WTC11 (cell line): ENCODE measurements at regions of chr19 and their contacts with region 1.

Region 1: DNA sequence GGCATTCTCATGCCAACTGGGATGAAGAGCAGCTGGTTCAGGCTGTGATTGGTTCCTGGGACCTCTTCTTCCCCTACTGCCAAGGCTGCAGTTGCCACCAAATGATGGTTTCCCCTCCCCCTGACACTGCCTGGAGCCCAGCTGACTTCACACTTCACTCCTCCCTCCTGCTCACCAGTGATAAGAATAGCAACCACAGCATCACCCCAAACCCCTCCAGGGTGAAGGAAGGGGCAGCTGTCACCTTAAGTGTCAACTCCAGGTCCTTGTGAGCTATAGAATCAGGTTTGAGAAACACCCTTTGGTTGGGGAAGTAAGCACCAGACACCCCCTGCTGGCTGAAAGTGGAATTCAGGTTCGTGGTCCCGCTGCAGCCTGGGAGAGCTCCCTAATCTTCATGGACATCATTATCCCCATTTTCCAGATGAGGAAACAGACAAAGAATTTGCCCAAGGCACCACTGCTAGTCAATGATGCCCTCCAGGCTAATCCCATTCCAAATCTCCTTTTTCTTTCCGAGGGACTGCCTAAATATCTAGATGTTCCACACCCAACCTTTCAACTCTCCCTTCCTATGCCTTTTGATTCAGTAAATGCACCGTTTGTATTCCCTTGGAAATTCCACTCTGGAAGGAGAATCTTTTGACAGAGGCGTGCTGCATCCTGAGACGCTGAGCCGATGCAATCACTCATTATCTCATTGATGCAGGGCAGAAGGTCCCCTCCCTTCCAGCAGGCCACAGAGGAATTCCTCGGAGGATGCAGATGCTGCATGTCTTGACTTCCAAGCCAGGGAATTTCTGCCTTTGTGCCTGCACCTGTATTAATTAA is 50.6 kb upstream of the UQCRFS1 start:
- DNase-seq: peak; percentile 78
- ATAC-seq: peak; percentile 64
- H3K4me3 Mint-ChIP-seq: no peak overlapping the region
- H3K27ac Mint-ChIP-seq: no peak overlapping the region
- H3K4me1 Mint-ChIP-seq: peaks cover 11% of the 10 kb centered on the region
- H3K27me3 Mint-ChIP-seq: no peaks in the 10 kb centered on the region; the same call in 1 of the 2 replicates
- CTCF ChIP-seq: peak; percentile 83

Region 2: DNA sequence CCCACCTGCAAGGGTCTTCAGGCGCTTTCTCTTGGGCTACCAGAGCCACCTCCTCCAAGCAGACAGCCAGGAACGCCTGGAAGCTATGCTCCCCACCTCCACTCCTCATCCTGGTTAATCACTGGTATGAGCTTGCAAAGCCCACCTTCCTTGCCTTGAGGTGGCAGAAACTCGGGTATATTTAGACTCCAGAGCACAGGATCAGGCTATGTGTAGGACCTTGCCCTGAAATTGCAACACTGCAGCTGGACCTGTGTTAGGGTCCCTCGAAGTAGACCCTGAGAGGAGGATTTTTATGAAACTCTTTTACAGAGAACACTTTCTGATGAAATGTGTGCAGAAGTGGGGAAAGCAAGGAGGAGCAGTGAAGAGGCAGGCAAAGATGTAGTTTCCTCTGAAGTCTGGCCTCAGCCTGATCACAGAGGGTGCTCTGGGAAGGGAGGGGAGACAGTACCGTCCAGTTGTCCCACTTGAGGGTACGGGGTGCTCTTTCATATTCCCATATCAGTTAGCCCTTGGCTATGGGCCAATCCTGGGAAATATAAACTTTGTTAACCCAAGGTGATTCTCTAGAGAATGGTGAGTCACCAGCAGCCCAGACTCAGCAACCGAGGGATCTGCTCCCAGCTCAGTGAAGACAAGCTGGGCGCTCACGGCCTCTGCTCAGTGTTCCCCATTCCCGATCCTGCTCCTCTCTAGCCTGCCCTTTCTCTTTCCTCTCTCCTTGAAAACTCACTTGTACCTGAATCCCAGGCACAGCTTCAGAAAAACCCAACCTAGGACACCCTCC is 208.4 kb before region 1 on chr19:
- CTCF ChIA-PET with region 1: interaction called, 11 read pairs
- POLR2A ChIA-PET with region 1: no interaction called
- DNase-seq: no peak
- ATAC-seq: no peak
- H3K4me3 Mint-ChIP-seq: no peak overlapping the region
- H3K27ac Mint-ChIP-seq: no peak overlapping the region
- H3K4me1 Mint-ChIP-seq: peaks cover 13% of the 10 kb centered on the region
- H3K27me3 Mint-ChIP-seq: peaks cover 9% of the 10 kb centered on the region
- CTCF ChIP-seq: no peak

Region 3: DNA sequence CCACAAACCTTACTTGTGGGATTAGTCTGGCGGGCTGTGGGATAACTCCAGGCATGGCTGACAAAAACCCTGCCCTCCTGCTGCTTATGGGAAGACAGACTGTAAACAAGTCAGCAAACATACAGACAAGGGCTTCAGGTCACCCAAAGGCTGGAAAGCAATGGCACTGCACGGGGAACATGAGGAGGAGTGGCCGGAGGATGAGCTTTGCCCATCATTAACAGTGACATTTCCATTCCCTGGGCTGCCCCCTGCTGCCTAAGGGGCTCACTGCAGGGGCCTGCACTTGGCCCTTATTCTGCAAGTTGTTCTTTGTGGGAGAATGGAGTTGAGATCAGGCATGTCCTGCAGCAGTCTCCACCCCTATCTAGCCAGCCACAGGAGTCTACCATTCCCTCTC is 141.8 kb before region 1 on chr19:
- CTCF ChIA-PET with region 1: interaction called, 23 read pairs
- POLR2A ChIA-PET with region 1: no interaction called
- DNase-seq: peak; percentile 70
- ATAC-seq: peak; percentile 90
- H3K4me3 Mint-ChIP-seq: no peak overlapping the region
- H3K27ac Mint-ChIP-seq: no peak overlapping the region
- H3K4me1 Mint-ChIP-seq: no peaks in the 10 kb centered on the region
- H3K27me3 Mint-ChIP-seq: no peaks in the 10 kb centered on the region; the same call in 1 of the 2 replicates
- CTCF ChIP-seq: peak; percentile 65

Region 4: GRCh38 chr19:29193116-29193515 is 70.4 kb before region 1 on chr19:
- CTCF ChIA-PET with region 1: interaction called, 12 read pairs
- POLR2A ChIA-PET with region 1: no interaction called
- DNase-seq: no peak
- ATAC-seq: no peak
- H3K4me3 Mint-ChIP-seq: no peak overlapping the region
- H3K27ac Mint-ChIP-seq: no peak overlapping the region
- H3K4me1 Mint-ChIP-seq: peaks cover 33% of the 10 kb centered on the region
- H3K27me3 Mint-ChIP-seq: peaks cover 4% of the 10 kb centered on the region; the same call in 1 of the 2 replicates
- CTCF ChIP-seq: no peak

Region 5: DNA sequence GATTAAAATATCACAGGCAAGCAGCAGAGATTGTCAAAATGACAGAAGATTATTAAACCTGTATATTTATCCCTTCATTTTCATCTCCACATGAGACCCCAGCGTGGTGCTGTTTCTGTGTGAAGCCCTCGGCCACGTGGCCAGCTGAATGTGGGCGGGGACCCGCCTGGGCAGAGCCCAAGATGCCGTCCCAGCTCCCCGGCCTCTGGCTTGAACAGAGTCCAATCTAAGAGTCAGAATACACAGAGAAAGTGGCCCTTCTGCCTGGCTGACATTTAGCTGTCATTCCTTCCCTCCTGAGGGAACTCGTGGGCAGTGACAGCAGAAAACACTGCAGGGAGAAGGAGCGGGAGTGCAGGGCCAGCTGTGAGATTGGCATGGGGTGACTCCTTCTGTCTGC is 15.6 kb before region 1 on chr19:
- CTCF ChIA-PET with region 1: interaction called, 40 read pairs
- POLR2A ChIA-PET with region 1: no interaction called
- DNase-seq: no peak
- ATAC-seq: no peak
- H3K4me3 Mint-ChIP-seq: no peak overlapping the region
- H3K27ac Mint-ChIP-seq: no peak overlapping the region
- H3K4me1 Mint-ChIP-seq: peaks cover 21% of the 10 kb centered on the region
- H3K27me3 Mint-ChIP-seq: no peaks in the 10 kb centered on the region; the same call in 1 of the 2 replicates
- CTCF ChIP-seq: no peak

Region 6: DNA sequence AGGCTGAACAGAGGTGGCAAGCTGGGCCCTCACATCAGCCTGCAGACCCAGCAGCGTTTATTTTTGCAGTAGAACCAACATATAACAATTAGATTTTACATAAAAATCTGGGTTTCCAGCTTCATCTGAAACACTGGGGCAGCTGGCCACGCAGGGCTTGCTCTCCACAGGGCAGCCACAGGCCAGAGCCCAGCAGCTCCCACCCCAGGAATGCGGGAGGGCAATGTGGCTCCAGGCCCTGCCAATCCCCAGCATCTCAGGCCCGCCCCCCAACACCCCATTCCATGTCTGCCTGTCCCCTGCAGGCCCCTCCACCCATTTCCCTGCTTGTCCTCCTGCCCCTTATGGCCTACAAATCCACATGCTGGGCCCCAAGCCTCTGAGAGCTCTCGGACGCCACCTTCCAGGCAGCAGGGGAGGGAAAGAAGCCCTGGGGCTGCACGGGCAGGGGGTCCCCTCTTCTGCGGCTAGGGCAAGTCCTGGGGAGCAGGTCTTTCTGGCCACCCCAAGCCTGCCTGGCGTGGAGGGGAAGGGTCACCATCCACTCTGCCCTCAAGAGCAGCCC is 247.3 kb after region 1 on chr19:
- CTCF ChIA-PET with region 1: interaction called, 11 read pairs
- POLR2A ChIA-PET with region 1: no interaction called
- DNase-seq: peak; percentile 54
- ATAC-seq: peak; percentile 83
- H3K4me3 Mint-ChIP-seq: no peak overlapping the region
- H3K27ac Mint-ChIP-seq: no peak overlapping the region
- H3K4me1 Mint-ChIP-seq: peaks cover 9% of the 10 kb centered on the region
- H3K27me3 Mint-ChIP-seq: peaks cover 11% of the 10 kb centered on the region
- CTCF ChIP-seq: no peak